Panc1 (cell line): ENCODE measurements at regions of chr5 and their contacts with region 1.

Region 1: DNA sequence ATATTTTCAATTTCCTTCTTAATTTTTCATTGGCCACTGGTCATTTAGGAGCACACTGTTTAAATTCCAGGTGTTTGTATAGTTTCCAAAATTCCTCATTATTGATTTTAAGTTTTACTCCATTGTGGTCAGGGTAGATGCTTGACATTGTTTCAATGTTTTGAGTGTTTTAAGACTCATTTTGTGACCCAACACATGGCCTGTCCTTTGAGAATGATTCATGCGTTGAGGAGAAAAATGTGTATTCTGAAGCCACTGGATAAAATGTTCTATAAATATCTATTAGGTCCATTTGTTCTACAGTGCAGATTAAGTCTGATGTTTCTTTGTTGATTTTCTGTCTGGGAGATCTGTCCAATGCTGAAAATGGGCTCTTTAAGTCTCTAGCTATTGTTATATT is 24.4 kb upstream of the FNIP1 start:
- DNase-seq: no peak
- ATAC-seq: no peak
- H3K4me3 ChIP-seq: no peak overlapping the region
- H3K27ac ChIP-seq: no peak overlapping the region
- H3K4me1 ChIP-seq: no peaks in the 10 kb centered on the region
- H3K27me3 ChIP-seq: no peaks in the 10 kb centered on the region
- CTCF ChIP-seq: no peak

Region 2: DNA sequence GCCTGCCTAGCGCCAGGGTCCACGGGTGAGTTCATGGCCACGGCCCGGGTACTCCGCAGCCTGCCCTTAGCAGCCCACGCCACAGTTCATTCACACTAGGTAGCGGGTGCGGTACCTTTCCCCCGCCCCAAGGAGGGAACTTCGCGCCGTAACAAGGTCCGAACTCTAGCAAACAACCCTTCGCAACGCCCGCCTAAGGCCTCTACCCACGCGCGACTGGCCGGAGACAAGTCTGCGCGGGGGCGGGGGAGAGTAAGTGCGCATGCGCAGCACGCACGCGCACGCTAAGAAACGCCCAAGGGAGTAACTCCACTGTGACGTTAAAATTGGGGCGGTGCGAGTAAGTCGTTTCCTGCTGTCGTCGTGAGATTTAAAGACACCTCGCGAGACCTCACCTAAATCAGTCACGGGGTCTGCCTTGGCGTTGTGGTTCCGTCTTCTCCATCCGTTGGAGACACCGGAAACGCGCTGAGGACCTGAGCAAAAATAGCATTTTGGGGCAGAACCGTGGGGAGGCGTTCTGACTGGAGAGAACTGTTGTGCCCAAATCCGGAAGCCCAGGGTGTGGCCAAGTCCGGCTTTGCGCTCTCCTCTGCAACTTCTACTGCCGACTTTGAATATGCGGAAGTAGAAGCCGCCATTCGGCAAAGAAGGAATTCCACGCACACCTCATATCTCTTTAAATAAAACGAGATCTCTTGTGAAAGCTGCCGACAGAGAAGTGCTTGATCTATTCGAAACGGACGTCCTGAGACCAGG is 186.0 kb before region 1 on chr5 and contains the start of gene RAPGEF6:
- CTCF ChIA-PET with region 1: no interaction called
- POLR2A ChIA-PET with region 1: no interaction called
- in situ Hi-C with region 1: no loop called
- intact Hi-C with region 1: no loop called
- DNase-seq: peak; percentile 99
- ATAC-seq: peak; percentile 95
- H3K4me3 ChIP-seq: peak within 1 kb of the TSS; percentile 87 to 92
- H3K27ac ChIP-seq: peak within 1 kb of the TSS; percentile 100
- H3K4me1 ChIP-seq: peaks cover 26% of the 10 kb centered on the region
- H3K27me3 ChIP-seq: no peaks in the 10 kb centered on the region
- CTCF ChIP-seq: no peak
- total RNA-seq, gene RAPGEF6: 25.0 TPM

Region 3: DNA sequence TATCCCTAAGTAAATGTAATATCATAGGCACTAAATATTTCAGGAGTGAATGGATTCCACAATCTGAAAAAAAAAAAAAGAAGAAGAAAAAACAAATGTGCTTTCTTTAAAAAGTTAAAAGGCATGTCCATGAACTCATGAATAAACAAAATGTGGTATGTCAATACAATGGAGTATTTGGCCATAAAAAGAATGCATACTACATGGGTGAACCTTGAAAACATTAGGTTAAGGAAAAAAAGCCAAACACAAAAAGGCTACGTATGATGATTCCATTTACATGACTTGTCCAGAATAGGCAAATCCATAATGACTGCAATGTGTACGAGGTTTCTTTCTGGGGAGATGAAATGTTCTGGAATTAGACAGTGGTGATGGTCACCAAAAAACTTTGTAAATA is 69.7 kb before region 1 on chr5:
- CTCF ChIA-PET with region 1: no interaction called
- POLR2A ChIA-PET with region 1: interaction called, 10 read pairs
- in situ Hi-C with region 1: no loop called
- intact Hi-C with region 1: no loop called
- DNase-seq: no peak
- ATAC-seq: no peak
- H3K4me3 ChIP-seq: no peak overlapping the region
- H3K27ac ChIP-seq: no peak overlapping the region
- H3K4me1 ChIP-seq: no peaks in the 10 kb centered on the region
- H3K27me3 ChIP-seq: no peaks in the 10 kb centered on the region
- CTCF ChIP-seq: no peak

Region 4: GRCh38 chr5:131979816-131980215 is 158.6 kb after region 1 on chr5:
- CTCF ChIA-PET with region 1: no interaction called
- POLR2A ChIA-PET with region 1: interaction called, 11 read pairs
- in situ Hi-C with region 1: no loop called
- intact Hi-C with region 1: no loop called
- DNase-seq: no peak
- ATAC-seq: no peak
- H3K4me3 ChIP-seq: no peak overlapping the region
- H3K27ac ChIP-seq: no peak overlapping the region
- H3K4me1 ChIP-seq: no peaks in the 10 kb centered on the region
- H3K27me3 ChIP-seq: no peaks in the 10 kb centered on the region
- CTCF ChIP-seq: no peak